Esophagus muscularis mucosa (tissue), 4 donors: ENCODE measurements at regions of chr4 and their contacts with region 1.

Region 1: GRCh38 chr4:168831919-168832762 is 177.9 kb downstream of the CBR4 start:
- DNase-seq: peak; percentile 95
- H3K4me3 ChIP-seq: peak overlapping the region; percentile 79 to 96 (median 90)
- H3K27ac ChIP-seq: peak overlapping the region; percentile 97 to 99 (median 99)
- H3K4me1 ChIP-seq: peaks cover 4 to 28% (median 23%) of the 10 kb centered on the region in 4 donors
- H3K27me3 ChIP-seq: peaks cover 0 to 4% (median 0%) of the 10 kb centered on the region in 4 donors
- CTCF ChIP-seq: peak in 1 of 3 experiments; percentile 4
- EP300 ChIP-seq: peak; percentile 14
- POLR2A ChIP-seq: peak; percentile 89

Region 2: DNA sequence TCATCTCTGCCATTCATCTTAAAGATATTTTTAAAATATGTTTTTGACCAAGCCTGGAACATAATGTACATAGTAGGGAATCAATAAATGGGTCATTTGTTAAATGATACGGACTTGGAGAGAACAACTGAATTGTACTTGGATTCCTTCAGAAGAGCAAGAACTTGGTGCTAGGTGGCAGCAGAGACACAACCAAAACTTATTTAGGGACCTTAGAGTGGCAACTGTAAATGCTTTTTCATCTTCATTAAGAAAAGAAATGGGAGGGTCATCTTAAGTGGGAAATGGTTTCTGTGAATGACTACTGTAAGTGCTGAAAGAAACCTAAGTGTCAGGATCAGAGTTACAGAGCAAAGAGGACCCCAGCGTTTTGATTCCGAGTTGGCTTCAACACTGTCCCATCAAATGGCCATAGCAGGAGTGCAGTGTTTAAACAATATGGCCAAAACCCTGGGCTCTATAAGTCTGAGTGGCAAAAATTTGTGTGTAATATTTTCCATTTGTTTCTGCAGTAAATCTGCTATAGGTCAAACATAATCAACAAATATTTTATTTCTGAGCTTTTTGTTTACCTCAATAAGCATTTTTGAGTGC is 121.7 kb before region 1 on chr4:
- intact Hi-C with region 1: loop called (anchors 5 kb)
- DNase-seq: no peak
- H3K4me3 ChIP-seq: no peak overlapping the region
- H3K27ac ChIP-seq: peak overlapping the region; percentile 75 to 82 (median 79)
- H3K4me1 ChIP-seq: peaks cover 19 to 43% (median 29%) of the 10 kb centered on the region in 4 donors
- H3K27me3 ChIP-seq: no peaks in the 10 kb centered on the region
- CTCF ChIP-seq: peak; percentile 68 to 74 (median 72)
- EP300 ChIP-seq: no peak
- POLR2A ChIP-seq: no peak

Region 3: GRCh38 chr4:168815379-168816345 is 16.5 kb before region 1 on chr4:
- intact Hi-C with region 1: loop called (anchors 2 kb)
- DNase-seq: no peak
- H3K4me3 ChIP-seq: peak overlapping the region; percentile 31 to 43 (median 39)
- H3K27ac ChIP-seq: peak overlapping the region; percentile 88 to 90 (median 90)
- H3K4me1 ChIP-seq: peaks cover 44 to 88% (median 87%) of the 10 kb centered on the region in 4 donors
- H3K27me3 ChIP-seq: no peaks in the 10 kb centered on the region
- CTCF ChIP-seq: no peak
- EP300 ChIP-seq: peak; percentile 91
- POLR2A ChIP-seq: no peak

Region 4: DNA sequence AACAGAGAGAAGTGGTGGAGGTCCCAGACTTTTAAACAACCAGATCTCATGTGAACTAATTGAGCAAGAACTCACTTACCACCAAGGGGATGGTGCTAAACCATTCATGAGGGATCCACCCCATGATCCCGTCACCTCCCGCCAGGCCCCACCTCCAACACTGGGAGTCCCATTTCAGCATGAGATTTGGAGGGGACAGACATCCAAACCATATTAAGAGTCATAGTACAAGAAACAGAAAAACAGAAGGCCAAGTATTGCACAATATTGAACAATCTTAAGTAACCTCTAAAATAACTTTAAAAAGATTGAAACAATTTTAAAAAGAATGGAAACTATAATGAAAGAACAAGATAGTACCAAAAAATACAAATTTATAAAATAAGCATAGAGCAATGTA is 67.9 kb after region 1 on chr4:
- intact Hi-C with region 1: no loop called
- DNase-seq: no peak
- H3K4me3 ChIP-seq: no peak overlapping the region
- H3K27ac ChIP-seq: peak overlapping the region; percentile 42 to 61 (median 54)
- H3K4me1 ChIP-seq: peaks cover 4 to 43% (median 18%) of the 10 kb centered on the region in 4 donors
- H3K27me3 ChIP-seq: no peaks in the 10 kb centered on the region
- CTCF ChIP-seq: no peak
- EP300 ChIP-seq: no peak
- POLR2A ChIP-seq: no peak

Region 5: GRCh38 chr4:168917138-168917779 is 85.1 kb after region 1 on chr4:
- intact Hi-C with region 1: loop called (anchors 5 kb)
- DNase-seq: no peak
- H3K4me3 ChIP-seq: no peak overlapping the region
- H3K27ac ChIP-seq: peak overlapping the region; percentile 34 to 59 (median 52)
- H3K4me1 ChIP-seq: peaks cover 11 to 70% (median 45%) of the 10 kb centered on the region in 4 donors
- H3K27me3 ChIP-seq: no peaks in the 10 kb centered on the region
- CTCF ChIP-seq: peak; percentile 48 to 60 (median 55)
- EP300 ChIP-seq: no peak
- POLR2A ChIP-seq: no peak